ENCODE measurements at regions of chr10 and their contacts with region 1.

Region 1: GRCh38 chr10:92517034-92517655 is 56.7 kb downstream of the IDE start:
- DNase-seq: no peak
- H3K4me3 ChIP-seq: no peak overlapping the region
- H3K27ac ChIP-seq: no peak overlapping the region
- H3K4me1 ChIP-seq: no peaks in the 10 kb centered on the region
- H3K27me3 ChIP-seq: no peaks in the 10 kb centered on the region
- CTCF ChIP-seq: peak; percentile 44 to 79 (median 55)
- POLR2A ChIP-seq: no peak

Region 2: GRCh38 chr10:92381543-92381954 is 135.6 kb before region 1 on chr10:
- intact Hi-C with region 1: no loop called
- DNase-seq: no peak
- H3K4me3 ChIP-seq: no peak overlapping the region
- H3K27ac ChIP-seq: no peak overlapping the region
- H3K4me1 ChIP-seq: no peaks in the 10 kb centered on the region
- H3K27me3 ChIP-seq: no peaks in the 10 kb centered on the region
- CTCF ChIP-seq: no peak
- POLR2A ChIP-seq: no peak

Region 3: GRCh38 chr10:92573798-92574547 is 56.8 kb after region 1 on chr10 and contains the start of gene IDE:
- intact Hi-C with region 1: loop called (anchors 5 kb)
- DNase-seq: peak in 1 of 2 donors; percentile 88
- H3K4me3 ChIP-seq: peak within 1 kb of the TSS; percentile 81 to 87
- H3K27ac ChIP-seq: peak within 1 kb of the TSS; percentile 94
- H3K4me1 ChIP-seq: peaks cover 48% of the 10 kb centered on the region
- H3K27me3 ChIP-seq: no peaks in the 10 kb centered on the region
- CTCF ChIP-seq: peak in 2 of 3 experiments; percentile 67 to 70
- POLR2A ChIP-seq: no peak
- total RNA-seq, gene IDE: 22.3 TPM

Measured in vagina (tissue), 2 donors.